A549 (cell line): ENCODE measurements at regions of chrX and their contacts with region 1.

Region 1: GRCh38 chrX:104098151-104098808 is 14.0 kb upstream of the ZCCHC18 start:
- DNase-seq: peak; percentile 15 to 79
- ATAC-seq: peak; percentile 71 to 84; a peak in 5 of 6 replicates
- H3K4me3 ChIP-seq: no peak overlapping the region
- H3K27ac ChIP-seq: no peak overlapping the region
- H3K4me1 ChIP-seq: no peaks in the 10 kb centered on the region
- CTCF ChIP-seq: peak; percentile 67
- EP300 ChIP-seq: no peak
- POLR2A ChIP-seq: no peak
- RAD21 ChIP-seq: peak; percentile 50 to 60

Region 2: GRCh38 chrX:104113222-104113965 is 15.1 kb after region 1 on chrX:
- CTCF ChIA-PET with region 1: interaction called, 15 read pairs
- POLR2A ChIA-PET with region 1: no interaction called
- DNase-seq: peak; percentile 29 to 69
- ATAC-seq: peak; percentile 85 to 94
- H3K4me3 ChIP-seq: peak overlapping the region; percentile 60
- H3K27ac ChIP-seq: 0 out of 6 replicates have a peak overlapping the region, but pooled peaks of 1 of the 2 experiments have one; percentile 66
- H3K4me1 ChIP-seq: no peaks in the 10 kb centered on the region
- CTCF ChIP-seq: peak; percentile 49
- EP300 ChIP-seq: no peak
- POLR2A ChIP-seq: no peak
- RAD21 ChIP-seq: peak; percentile 43 to 52; a peak in 3 of 5 replicates

Region 3: DNA sequence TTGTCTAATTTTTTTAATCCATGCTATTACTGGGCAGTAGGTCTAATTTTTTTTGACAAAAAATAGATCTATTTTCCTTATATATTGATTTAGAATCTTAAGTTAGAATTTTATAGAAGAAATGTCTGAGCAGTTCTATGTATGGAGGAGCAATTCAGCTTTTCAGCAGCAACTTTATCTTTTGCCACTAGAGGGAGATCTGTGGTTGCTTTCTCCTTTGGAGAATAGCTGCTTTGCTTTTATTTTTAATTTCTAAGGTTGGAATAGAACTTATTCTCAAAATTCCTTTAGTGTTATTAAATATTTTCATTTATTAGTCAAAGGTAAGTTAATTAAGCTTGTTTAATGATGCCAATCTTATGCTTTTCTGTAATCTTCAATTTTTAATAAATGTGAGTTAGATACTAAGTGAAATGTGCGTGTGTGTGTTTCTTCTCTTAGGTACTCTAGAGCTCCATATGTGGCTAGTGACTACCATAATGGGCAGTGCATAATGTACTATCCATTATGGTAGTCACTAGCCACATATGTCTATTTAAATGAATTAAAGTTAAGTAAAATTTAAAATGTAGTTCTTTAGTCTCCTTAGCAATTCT is 97.3 kb after region 1 on chrX:
- CTCF ChIA-PET with region 1: no interaction called
- POLR2A ChIA-PET with region 1: no interaction called
- DNase-seq: peak; percentile 4 to 14
- ATAC-seq: peak; percentile 50 to 73; a peak in 2 of 6 replicates
- H3K4me3 ChIP-seq: no peak overlapping the region
- H3K27ac ChIP-seq: no peak overlapping the region
- H3K4me1 ChIP-seq: no peaks in the 10 kb centered on the region
- CTCF ChIP-seq: peak; percentile 64
- EP300 ChIP-seq: no peak
- POLR2A ChIP-seq: no peak
- RAD21 ChIP-seq: peak; percentile 39 to 49

Region 4: DNA sequence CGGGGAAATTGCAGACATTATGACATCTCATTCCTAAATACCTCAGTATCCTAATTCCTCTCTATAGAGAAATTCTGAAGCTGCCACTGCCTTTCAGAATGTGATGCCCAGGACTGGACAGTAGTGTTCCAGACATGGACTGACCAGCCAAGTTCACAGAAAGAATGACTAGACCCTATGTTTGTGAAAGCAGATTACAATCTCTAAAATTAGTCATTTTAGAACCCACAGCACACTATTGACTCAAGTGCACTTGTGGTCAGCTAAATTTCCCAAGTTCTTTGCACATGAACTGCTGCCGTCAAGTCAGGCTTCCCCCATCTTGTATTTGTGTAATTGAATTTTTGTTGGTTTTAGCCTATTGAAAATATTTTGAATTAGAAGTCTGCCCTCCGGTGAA is 237.5 kb after region 1 on chrX:
- CTCF ChIA-PET with region 1: no interaction called
- POLR2A ChIA-PET with region 1: no interaction called
- DNase-seq: peak in 1 of 2 experiments; percentile 38
- ATAC-seq: peak; percentile 50 to 82; a peak in 5 of 6 replicates
- H3K4me3 ChIP-seq: no peak overlapping the region
- H3K27ac ChIP-seq: no peak overlapping the region
- H3K4me1 ChIP-seq: peaks cover 9% of the 10 kb centered on the region; the same call in 1 of the 3 replicates
- CTCF ChIP-seq: no peak
- EP300 ChIP-seq: no peak
- POLR2A ChIP-seq: no peak
- RAD21 ChIP-seq: no peak